Posterior vena cava (tissue), 2 donors: ENCODE measurements at regions of chr4 and their contacts with region 1.

Region 1: DNA sequence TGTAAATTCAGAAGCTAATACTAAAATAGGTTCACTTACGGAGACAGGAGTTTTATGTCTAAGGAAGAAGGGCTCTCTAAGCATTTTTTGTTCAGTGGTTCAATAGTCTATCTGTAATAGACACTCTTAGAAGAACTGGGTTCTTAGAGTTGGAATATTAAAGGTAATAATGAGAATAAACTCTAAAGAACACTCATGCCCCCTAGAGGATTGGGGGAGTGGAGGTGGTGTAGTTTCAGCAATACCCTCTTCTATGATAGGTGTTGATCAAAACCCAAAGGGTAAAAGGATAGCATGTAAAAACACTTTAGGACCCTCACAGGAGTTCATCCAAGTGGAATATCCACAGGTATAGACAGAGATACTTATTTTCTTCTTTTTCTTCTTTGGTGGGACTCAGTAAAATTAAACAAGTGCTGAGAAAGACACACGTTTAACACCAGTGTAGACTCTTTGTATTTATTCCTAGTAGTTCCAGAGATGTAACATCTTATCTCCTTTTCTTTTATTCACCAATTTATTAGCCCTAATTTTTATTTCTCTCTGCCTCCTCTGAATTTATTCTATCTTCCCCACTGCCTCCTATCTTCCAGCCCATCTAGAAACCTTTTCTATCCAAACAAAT is 25.7 kb upstream of the MND1 start:
- DNase-seq: no peak

Region 2: GRCh38 chr4:153142700-153143438 is 175.9 kb before region 1 on chr4:
- intact Hi-C with region 1: loop called (anchors 5 to 10 kb)
- DNase-seq: no peak

Region 3: GRCh38 chr4:153296040-153296823 is 22.6 kb before region 1 on chr4:
- intact Hi-C with region 1: no loop called
- DNase-seq: peak; percentile 47